ENCODE measurements at regions of chr3 and their contacts with region 1.

Region 1: DNA sequence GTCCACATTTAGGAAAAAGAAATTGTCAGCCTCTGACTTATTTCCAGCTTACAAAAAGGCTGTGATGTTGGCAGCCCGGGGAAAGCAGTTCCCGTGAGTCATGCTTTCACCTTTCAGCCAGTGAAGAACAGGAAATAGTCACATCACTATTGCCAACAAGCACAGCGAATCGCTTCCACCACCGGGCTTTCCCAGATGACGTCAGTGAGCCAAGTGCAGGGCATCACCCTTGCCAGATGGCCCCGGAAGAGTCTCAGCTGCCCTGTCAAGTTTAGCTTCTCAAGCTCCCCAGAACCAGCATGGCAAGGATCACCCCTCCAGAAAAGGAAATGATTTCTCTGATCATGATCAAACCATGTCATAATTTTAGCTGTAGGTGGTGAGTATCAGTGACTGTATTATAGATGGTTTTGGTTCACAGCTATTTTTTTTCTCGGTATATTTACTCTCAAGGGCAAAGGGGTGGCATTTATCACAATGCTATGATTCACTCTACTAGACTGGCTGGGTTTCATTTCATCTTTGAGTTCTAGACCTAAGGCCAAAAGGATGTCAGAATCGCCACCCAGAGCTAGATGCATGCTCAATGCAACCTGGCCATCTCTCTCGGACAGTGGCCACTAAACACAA is 32.9 kb downstream of the B3GNT5 start:
- DNase-seq: peak; percentile 97
- H3K4me3 ChIP-seq: peak overlapping the region in 1 of 3 experiments; percentile 10
- H3K27ac ChIP-seq: peak overlapping the region; percentile 91
- H3K4me1 ChIP-seq: peaks cover 30% of the 10 kb centered on the region
- H3K27me3 ChIP-seq: no peaks in the 10 kb centered on the region
- CTCF ChIP-seq: no peak
- POLR2A ChIP-seq: no peak

Region 2: DNA sequence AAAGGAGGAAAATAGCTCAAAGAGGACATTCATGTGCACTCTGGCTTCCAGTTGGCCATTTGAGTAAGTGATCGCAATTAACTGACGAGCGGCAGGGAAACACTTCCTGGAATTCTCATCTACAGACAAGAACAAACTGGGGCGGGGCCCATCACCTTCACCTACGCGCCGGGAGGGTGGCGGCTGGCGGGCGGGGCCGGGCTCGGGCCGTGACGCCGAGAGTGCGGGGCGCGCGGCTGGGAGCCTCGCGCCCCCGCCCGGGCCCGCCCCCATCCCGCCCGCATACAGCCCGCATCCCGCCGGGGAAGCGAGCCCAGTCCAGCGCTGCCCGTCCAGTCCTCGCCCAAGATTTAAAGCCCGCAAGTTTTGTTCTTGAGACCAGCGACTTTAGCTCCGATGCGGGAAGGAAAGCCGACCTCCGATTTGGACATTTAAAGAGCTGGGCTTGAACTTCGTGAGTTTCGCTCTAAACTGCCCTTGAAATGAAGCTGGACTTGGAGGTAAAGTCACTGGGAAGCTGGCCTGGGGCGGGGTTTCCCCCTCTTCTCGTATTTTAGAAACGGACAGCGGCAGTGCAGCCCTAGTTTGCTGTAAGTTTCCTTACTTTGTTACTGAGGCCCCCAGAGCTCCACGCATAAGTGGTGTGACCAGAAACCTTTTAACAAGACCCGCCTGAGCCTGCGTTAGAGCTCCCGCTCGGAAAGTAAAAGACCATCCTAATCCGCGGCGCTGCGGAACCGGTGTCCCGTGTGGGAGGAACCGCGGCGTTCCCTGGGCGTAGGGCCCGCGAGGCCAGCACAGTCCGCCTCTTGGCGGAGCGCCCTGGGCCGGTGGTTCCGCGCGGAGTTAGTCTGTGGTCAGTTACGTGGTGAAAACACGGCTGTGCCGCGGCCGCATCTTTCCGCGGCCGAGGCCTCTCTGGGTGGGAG is 32.7 kb before region 1 on chr3 and contains the start of gene B3GNT5:
- CTCF ChIA-PET with region 1: interaction called, 16 read pairs
- POLR2A ChIA-PET with region 1: no interaction called
- dilution Hi-C with region 1: no loop called
- intact Hi-C with region 1: loop called (anchors 1 kb)
- DNase-seq: peak; percentile 71
- H3K4me3 ChIP-seq: peak within 1 kb of the TSS; percentile 51 to 75 (median 62)
- H3K27ac ChIP-seq: peak within 1 kb of the TSS; percentile 54
- H3K4me1 ChIP-seq: peaks cover 13% of the 10 kb centered on the region
- H3K27me3 ChIP-seq: no peaks in the 10 kb centered on the region
- CTCF ChIP-seq: no peak
- POLR2A ChIP-seq: no peak
- total RNA-seq, gene B3GNT5: 25.6 and 29.4 TPM in 2 replicates

Region 3: DNA sequence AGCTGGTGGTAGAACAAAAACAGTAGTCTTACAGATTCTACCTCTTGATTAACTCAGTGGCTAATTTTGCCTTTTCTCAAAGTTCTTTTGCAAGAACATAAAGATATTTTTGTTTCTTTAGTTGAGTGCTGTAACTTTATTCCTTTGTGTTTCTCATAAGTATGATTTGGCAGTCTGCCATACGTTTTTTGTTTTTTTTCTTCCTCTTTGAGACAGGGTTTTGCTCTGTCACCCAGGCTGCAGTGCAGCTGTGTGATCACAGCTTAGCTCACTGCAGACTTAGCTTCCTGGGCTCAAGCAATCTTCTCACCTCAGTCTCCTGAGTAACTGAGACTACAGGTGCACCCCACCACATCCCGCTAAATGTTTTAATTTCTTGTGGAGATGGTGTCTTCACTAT is 10.5 kb before region 1 on chr3:
- CTCF ChIA-PET with region 1: interaction called, 16 read pairs
- POLR2A ChIA-PET with region 1: no interaction called
- dilution Hi-C with region 1: no loop called
- intact Hi-C with region 1: loop called (anchors 1 kb)
- DNase-seq: peak; percentile 82
- H3K4me3 ChIP-seq: no peak overlapping the region
- H3K27ac ChIP-seq: peak overlapping the region; percentile 54
- H3K4me1 ChIP-seq: peaks cover 27% of the 10 kb centered on the region
- H3K27me3 ChIP-seq: no peaks in the 10 kb centered on the region
- CTCF ChIP-seq: no peak
- POLR2A ChIP-seq: no peak

Region 4: GRCh38 chr3:183328823-183329222 is 42.9 kb after region 1 on chr3:
- CTCF ChIA-PET with region 1: interaction called, 5 read pairs
- POLR2A ChIA-PET with region 1: no interaction called
- dilution Hi-C with region 1: no loop called
- intact Hi-C with region 1: loop called (anchors 2 kb)
- DNase-seq: no peak
- H3K4me3 ChIP-seq: no peak overlapping the region
- H3K27ac ChIP-seq: no peak overlapping the region
- H3K4me1 ChIP-seq: peaks cover 24% of the 10 kb centered on the region
- H3K27me3 ChIP-seq: no peaks in the 10 kb centered on the region
- CTCF ChIP-seq: no peak
- POLR2A ChIP-seq: no peak

Region 5: GRCh38 chr3:183375787-183376186 is 89.8 kb after region 1 on chr3:
- CTCF ChIA-PET with region 1: interaction called, 4 read pairs
- POLR2A ChIA-PET with region 1: no interaction called
- dilution Hi-C with region 1: no loop called
- intact Hi-C with region 1: loop called (anchors 1 kb)
- DNase-seq: no peak
- H3K4me3 ChIP-seq: no peak overlapping the region
- H3K27ac ChIP-seq: no peak overlapping the region
- H3K4me1 ChIP-seq: peaks cover 11% of the 10 kb centered on the region
- H3K27me3 ChIP-seq: no peaks in the 10 kb centered on the region
- CTCF ChIP-seq: no peak
- POLR2A ChIP-seq: no peak

Measured in endothelial cell of umbilical vein (primary cell).